ENCODE measurements at regions of chr2 and their contacts with region 1.

Region 1: DNA sequence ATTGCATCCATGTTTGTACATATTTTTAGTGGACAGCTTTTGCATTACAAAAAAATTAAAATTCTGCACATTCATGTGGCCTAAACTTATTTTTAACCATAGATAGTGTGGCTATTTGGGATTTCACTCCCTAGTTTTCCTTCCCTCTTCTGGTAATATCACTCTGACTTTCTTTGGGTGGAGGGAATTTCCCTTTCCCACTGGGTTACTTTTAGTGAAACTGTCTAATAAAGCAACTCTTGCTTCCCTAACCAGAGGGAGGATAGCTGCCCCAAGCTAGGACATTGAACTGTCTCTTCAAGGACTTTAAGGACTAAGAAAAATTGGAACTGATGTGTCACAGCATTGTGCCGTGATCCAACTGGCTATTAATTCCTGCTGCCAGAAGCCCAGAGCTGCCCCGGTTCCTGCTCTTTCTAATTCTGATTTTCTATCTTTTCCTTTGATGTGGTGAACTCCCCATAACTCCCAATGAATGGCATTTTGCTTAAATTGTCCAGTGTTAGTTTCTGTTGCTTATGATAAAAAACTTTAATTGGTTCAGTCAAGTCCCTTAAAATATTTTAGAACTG is 20.0 kb upstream of the EFR3B start:
- DNase-seq: no peak
- ATAC-seq: no peak
- H3K4me3 Mint-ChIP-seq: no peak overlapping the region
- H3K27ac Mint-ChIP-seq: no peak overlapping the region
- H3K4me1 Mint-ChIP-seq: no peaks in the 10 kb centered on the region
- H3K27me3 Mint-ChIP-seq: peaks cover 2% of the 10 kb centered on the region

Region 2: DNA sequence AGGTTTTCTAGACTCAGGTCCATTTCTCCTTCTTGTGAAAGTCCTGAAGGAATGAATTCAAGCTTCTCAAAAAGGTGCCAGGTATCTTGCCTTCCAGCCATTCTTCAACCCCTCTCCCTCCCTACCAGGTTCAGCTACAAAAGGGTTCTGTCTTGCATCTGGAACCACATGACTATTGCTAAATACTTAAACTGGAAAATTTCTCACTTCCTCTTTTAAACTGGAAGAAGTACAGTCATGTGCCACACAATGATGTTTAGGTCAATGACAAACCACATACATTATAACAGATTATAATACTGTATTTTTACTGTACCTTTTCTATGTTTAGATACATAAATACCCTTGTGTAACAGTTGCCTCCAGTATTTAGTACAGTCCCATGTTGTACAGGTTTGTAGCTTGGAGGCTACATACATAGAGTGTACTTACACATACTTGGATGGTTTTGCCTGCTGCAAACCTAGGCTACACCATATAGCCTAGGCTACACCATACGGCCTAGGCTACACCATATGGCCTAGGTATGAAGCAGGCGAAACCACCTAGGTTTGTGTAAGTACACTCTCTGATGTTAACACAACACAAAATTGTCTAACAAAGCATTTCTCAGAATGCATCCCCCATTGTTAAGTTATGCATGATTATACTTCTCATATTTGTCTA is 461.9 kb after region 1 on chr2:
- CTCF ChIA-PET with region 1: no interaction called
- POLR2A ChIA-PET with region 1: no interaction called
- intact Hi-C with region 1: loop called in 1 of 2 experiments (anchors 5 kb)
- DNase-seq: no peak
- ATAC-seq: peak; percentile 16
- H3K4me3 Mint-ChIP-seq: no peak overlapping the region
- H3K27ac Mint-ChIP-seq: peak overlapping the region; percentile 10
- H3K4me1 Mint-ChIP-seq: peaks cover 3% of the 10 kb centered on the region
- H3K27me3 Mint-ChIP-seq: no peaks in the 10 kb centered on the region

Measured in activated CD4-positive, alpha-beta T cell treated with anti-CD3 and anti-CD28 coated beads for 36 hours (primary cell).